Posterior cingulate gyrus (tissue), 11 donors: ENCODE measurements at regions of chr5 and their contacts with region 1.

Region 1: DNA sequence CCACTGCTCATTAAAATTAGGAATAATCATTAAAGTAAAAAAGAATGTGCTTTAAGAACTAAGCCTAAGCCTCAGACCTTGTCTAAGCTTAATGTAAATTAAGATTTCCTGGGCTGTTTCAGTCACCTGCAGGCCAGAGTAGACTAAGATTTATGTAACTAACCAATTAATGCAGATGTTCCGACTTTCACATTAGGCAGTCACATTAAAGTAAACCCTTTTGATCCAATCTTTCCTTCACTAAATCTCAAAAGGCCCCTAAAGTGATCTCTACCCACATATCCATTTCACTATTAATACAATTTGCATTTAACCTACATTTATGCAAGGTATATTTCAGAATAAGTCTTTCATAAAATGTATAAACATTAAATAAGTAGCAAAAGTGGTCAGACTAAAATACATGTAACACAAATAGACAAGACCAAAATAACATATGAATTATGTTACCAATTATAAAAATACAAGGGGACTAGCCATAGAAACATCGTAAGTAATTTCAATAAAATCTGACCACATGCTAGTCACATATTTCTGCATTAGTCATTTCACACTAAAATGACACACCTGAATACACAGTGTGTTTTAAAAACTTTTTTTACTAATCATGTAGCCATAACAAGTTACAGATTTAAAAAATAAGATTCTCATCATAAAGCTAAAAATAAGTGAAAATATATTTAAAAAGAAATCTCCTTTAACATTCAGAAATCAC is 7.7 kb downstream of the NR3C1 start:
- DNase-seq: no peak

Region 2: GRCh38 chr5:143311428-143311827 is 84.4 kb before region 1 on chr5:
- intact Hi-C with region 1: no loop called
- DNase-seq: no peak

Region 3: GRCh38 chr5:143341807-143342570 is 53.8 kb before region 1 on chr5:
- intact Hi-C with region 1: loop called (anchors 10 kb)
- DNase-seq: no peak

Region 4: DNA sequence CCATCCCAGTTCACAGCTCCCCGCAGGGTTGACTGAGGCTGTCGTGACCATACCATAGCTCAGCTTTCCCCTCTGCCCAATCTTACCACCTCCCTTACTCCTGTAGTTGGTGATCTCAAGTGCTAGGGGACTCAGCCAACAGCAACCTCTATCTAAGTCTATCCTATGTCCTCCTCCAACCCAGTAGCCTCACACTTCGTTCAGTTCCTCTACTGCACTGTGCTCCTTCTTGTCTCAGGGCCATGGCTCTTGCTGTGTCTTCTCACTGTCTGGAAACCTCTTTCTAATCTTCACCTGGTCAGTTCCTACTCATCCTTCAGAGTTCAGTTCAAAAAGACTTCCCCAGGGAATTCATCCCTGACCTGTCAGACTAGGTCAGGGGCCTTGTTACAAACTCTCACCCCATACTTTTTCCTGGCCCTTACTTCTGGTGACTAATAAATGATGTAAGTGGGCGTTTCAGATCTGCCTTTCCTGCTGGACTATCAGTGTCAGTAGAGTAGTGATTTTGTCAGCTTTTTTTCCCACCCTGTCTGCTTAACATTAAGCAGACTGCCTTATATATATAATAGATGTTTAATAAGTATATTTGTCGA is 61.3 kb after region 1 on chr5:
- intact Hi-C with region 1: no loop called
- DNase-seq: no peak